ENCODE measurements at regions of chr2 and their contacts with region 1.

Region 1: DNA sequence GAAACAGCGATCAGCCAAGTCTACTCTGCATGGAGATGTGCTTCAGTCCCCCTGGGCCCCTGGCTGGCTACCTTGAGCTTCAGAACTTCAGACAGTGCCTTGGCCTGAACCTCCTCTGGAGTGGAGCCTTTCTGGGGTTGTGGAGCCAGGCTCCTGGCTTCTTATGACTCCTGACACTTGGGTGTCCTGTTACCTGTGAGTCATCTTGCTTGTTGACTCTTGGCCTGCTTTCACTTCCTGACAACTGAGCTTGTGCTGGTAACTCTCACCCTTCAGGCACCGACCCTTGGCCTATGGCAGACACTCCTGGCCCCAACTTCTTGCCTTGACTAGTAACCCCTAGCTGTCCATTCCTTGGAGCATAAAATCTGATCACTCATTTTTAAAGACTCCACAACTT is 46.5 kb upstream of the VIT start:
- DNase-seq: no peak
- ATAC-seq: no peak
- H3K4me3 ChIP-seq: no peak overlapping the region
- H3K27ac ChIP-seq: no peak overlapping the region
- H3K4me1 ChIP-seq: peaks cover 0 to 2% (median 0%) of the 10 kb centered on the region in 12 donors
- H3K27me3 ChIP-seq: no peaks in the 10 kb centered on the region
- CTCF ChIP-seq: no peak
- POLR2A ChIP-seq: no peak

Region 2: GRCh38 chr2:36530178-36530982 is 119.7 kb before region 1 on chr2:
- intact Hi-C with region 1: loop called in 1 of 10 experiments (anchors 10 kb)
- DNase-seq: no peak
- ATAC-seq: peak in 3 of 4 donors; percentile 4 to 28 (median 11)
- H3K4me3 ChIP-seq: peak overlapping the region in 1 of 12 donors; percentile 4
- H3K27ac ChIP-seq: peak overlapping the region in 9 of 12 donors; percentile 0 to 64 (median 41)
- H3K4me1 ChIP-seq: peaks cover 0 to 47% (median 17%) of the 10 kb centered on the region in 12 donors
- H3K27me3 ChIP-seq: no peaks in the 10 kb centered on the region
- CTCF ChIP-seq: no peak
- POLR2A ChIP-seq: no peak

Region 3: DNA sequence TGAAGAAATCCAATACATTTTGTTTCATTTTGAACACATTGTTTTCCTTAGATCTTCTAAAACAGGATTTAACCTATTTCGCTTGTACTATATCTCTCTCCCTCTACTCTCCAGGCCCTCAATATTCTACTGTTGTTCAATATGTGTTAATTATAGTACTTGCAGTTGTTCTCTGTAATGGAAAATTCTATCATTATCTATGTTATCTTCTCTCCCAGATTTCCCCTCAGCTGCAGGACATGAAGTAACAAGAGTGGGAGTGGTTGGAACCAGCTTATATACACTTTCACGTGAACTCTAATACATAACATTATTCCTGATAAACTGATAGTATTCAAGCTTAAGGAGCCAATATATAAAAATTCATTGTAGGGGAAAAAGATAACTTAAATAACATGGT is 323.3 kb after region 1 on chr2:
- intact Hi-C with region 1: no loop called
- DNase-seq: no peak
- ATAC-seq: peak; percentile 62 to 77 (median 68)
- H3K4me3 ChIP-seq: no peak overlapping the region
- H3K27ac ChIP-seq: peak overlapping the region in 9 of 12 donors; percentile 8 to 62 (median 31)
- H3K4me1 ChIP-seq: peaks cover 0 to 16% (median 4%) of the 10 kb centered on the region in 12 donors
- H3K27me3 ChIP-seq: no peaks in the 10 kb centered on the region
- CTCF ChIP-seq: no peak
- POLR2A ChIP-seq: peak in 1 of 2 donors; percentile 12

Measured in heart left ventricle (tissue), 16 donors.